Activated CD4-positive, alpha-beta memory T cell treated with anti-CD3 and anti-CD28 coated beads, Interleukin-2, amount 10 ng/mL, durations not matched to agents 7 days and 5 days (primary cell): ENCODE measurements at regions of chr21 and their contacts with region 1.

Region 1: DNA sequence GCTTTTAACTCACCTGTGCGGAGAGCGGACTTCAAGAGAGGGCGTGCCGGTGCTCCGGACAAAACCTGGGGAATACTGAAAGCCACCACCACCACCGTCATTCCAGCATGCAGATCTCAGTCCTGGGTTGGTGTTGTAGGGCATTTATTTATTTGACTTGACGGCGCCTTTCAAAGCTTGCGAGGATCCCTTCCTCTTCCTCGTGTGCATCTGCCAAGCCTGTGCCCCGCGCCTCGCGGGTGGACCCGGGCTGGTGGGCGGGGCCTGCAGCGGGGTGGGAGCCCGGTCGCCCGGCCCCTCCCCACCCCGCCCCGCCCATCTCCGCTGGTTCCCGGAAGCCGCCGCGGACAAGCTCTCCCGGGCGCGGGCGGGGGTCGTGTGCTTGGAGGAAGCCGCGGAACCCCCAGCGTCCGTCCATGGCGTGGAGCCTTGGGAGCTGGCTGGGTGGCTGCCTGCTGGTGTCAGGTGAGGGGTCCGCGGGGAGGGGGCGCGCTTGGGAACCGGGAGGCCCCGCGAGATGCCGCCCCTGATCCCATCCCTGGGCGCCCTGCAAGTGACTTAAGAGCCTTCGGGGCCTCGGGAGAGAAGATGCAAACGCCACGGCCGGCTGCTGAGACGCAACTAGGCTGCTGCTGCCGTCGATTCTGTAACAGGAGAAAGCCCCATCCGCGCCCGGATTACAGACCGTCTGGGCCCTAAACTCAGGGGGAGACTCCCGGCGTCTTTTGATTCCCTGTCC is at the start of gene IL10RB:
- DNase-seq: peak; percentile 76
- H3K4me3 Mint-ChIP-seq: peak within 1 kb of the TSS; percentile 95
- H3K27ac Mint-ChIP-seq: peak within 1 kb of the TSS; percentile 88
- H3K4me1 Mint-ChIP-seq: peaks cover 53% of the 10 kb centered on the region
- H3K27me3 Mint-ChIP-seq: no peaks in the 10 kb centered on the region
- total RNA-seq, gene IL10RB: 33.9 to 36.1 TPM

Region 2: GRCh38 chr21:33229784-33230544 is 36.3 kb before region 1 on chr21 and contains the start of gene IFNAR2:
- CTCF ChIA-PET with region 1: no interaction called
- POLR2A ChIA-PET with region 1: interaction called, 23 read pairs
- DNase-seq: peak; percentile 78
- H3K4me3 Mint-ChIP-seq: peak within 1 kb of the TSS; percentile 82
- H3K27ac Mint-ChIP-seq: peak within 1 kb of the TSS; percentile 92
- H3K4me1 Mint-ChIP-seq: peaks cover 42% of the 10 kb centered on the region
- H3K27me3 Mint-ChIP-seq: no peaks in the 10 kb centered on the region
- total RNA-seq, gene IFNAR2: 60.1 to 61.9 TPM

Region 3: GRCh38 chr21:33238565-33239255 is 27.5 kb before region 1 on chr21:
- CTCF ChIA-PET with region 1: interaction called, 3 read pairs
- POLR2A ChIA-PET with region 1: interaction called, 25 read pairs
- DNase-seq: peak; percentile 26
- H3K4me3 Mint-ChIP-seq: peak overlapping the region; percentile 41
- H3K27ac Mint-ChIP-seq: peak overlapping the region; percentile 92
- H3K4me1 Mint-ChIP-seq: peaks cover 71% of the 10 kb centered on the region
- H3K27me3 Mint-ChIP-seq: no peaks in the 10 kb centered on the region

Region 4: GRCh38 chr21:33332143-33332542 is 65.9 kb after region 1 on chr21:
- CTCF ChIA-PET with region 1: interaction called, 3 read pairs
- POLR2A ChIA-PET with region 1: interaction called, 12 read pairs
- DNase-seq: peak; percentile 32
- H3K4me3 Mint-ChIP-seq: no peak overlapping the region
- H3K27ac Mint-ChIP-seq: peak overlapping the region; percentile 73
- H3K4me1 Mint-ChIP-seq: peaks cover 46% of the 10 kb centered on the region
- H3K27me3 Mint-ChIP-seq: no peaks in the 10 kb centered on the region

Region 5: DNA sequence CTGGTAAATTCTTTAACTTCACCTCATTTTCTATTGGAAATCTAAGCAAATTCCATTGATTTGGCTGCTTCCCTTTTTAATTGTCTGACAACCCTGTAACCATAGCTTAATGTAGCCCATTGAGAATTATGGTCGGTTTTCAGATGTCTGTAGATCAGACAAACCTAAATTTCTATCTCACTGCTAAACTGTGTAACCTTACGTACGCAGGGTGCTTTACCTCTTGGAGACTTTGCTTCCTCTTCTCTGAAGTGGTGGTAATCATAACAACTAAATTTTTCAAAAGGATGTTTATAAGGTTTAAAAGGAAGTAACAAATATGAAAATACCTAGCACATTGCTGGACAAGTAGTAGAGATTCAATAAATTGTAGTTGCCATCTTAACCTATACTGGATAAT is 84.5 kb after region 1 on chr21:
- CTCF ChIA-PET with region 1: no interaction called
- POLR2A ChIA-PET with region 1: no interaction called
- DNase-seq: no peak
- H3K4me3 Mint-ChIP-seq: no peak overlapping the region
- H3K27ac Mint-ChIP-seq: no peak overlapping the region
- H3K4me1 Mint-ChIP-seq: peaks cover 7% of the 10 kb centered on the region
- H3K27me3 Mint-ChIP-seq: no peaks in the 10 kb centered on the region